GM12878 (cell line): ENCODE measurements at regions of chr15 and their contacts with region 1.

Region 1: DNA sequence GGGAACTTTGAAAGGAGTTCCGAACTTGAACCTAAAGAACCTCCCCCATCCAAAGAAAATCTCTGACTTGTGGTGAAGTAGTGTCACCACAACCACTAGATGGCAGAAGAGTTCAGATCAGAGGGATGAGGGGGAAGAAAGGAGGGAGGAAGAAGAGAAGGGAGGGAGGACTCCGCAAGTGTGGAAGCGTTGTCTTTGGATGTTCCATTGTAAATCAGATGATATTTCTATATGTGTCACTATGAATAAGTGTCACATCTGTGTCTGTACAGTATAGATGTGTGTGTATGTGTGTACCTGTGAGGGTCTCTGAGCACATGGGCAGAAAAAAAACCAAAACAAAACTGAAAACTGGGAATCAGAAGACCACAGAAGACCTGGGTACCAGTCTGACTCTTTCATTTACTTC is 16.9 kb downstream of the SLC24A1 start:
- DNase-seq: peak; percentile 28
- ATAC-seq: peak; percentile 77
- H3K4me3 ChIP-seq: no peak overlapping the region
- H3K27ac ChIP-seq: no peak overlapping the region
- H3K4me1 ChIP-seq: no peaks in the 10 kb centered on the region
- H3K27me3 ChIP-seq: no peaks in the 10 kb centered on the region
- CTCF ChIP-seq: peak; percentile 78 to 89 (median 88)
- EP300 ChIP-seq: no peak
- POLR2A ChIP-seq: no peak
- RAD21 ChIP-seq: peak; percentile 94

Region 2: GRCh38 chr15:64792282-64792681 is 846.4 kb before region 1 on chr15:
- CTCF ChIA-PET with region 1: no interaction called
- POLR2A ChIA-PET with region 1: no interaction called
- RAD21 ChIA-PET with region 1: no interaction called
- SMC1A ChIA-PET with region 1: no interaction called
- in situ Hi-C with region 1: no loop called
- intact Hi-C with region 1: no loop called
- DNase-seq: no peak
- ATAC-seq: no peak
- H3K4me3 ChIP-seq: no peak overlapping the region
- H3K27ac ChIP-seq: no peak overlapping the region
- H3K4me1 ChIP-seq: no peaks in the 10 kb centered on the region
- H3K27me3 ChIP-seq: no peaks in the 10 kb centered on the region
- CTCF ChIP-seq: no peak
- EP300 ChIP-seq: no peak
- POLR2A ChIP-seq: no peak
- RAD21 ChIP-seq: no peak

Region 3: GRCh38 chr15:65434201-65434600 is 204.5 kb before region 1 on chr15:
- CTCF ChIA-PET with region 1: no interaction called
- POLR2A ChIA-PET with region 1: no interaction called
- RAD21 ChIA-PET with region 1: no interaction called
- SMC1A ChIA-PET with region 1: no interaction called
- in situ Hi-C with region 1: no loop called
- intact Hi-C with region 1: no loop called
- DNase-seq: no peak
- ATAC-seq: no peak
- H3K4me3 ChIP-seq: no peak overlapping the region
- H3K27ac ChIP-seq: no peak overlapping the region
- H3K4me1 ChIP-seq: no peaks in the 10 kb centered on the region
- H3K27me3 ChIP-seq: no peaks in the 10 kb centered on the region; a peak in 1 of 4 replicates
- CTCF ChIP-seq: no peak
- EP300 ChIP-seq: no peak
- POLR2A ChIP-seq: no peak
- RAD21 ChIP-seq: no peak

Region 4: GRCh38 chr15:65603134-65603533 is 35.6 kb before region 1 on chr15:
- CTCF ChIA-PET with region 1: no interaction called
- POLR2A ChIA-PET with region 1: no interaction called
- RAD21 ChIA-PET with region 1: no interaction called
- SMC1A ChIA-PET with region 1: no interaction called
- in situ Hi-C with region 1: no loop called
- intact Hi-C with region 1: no loop called
- DNase-seq: no peak
- ATAC-seq: no peak
- H3K4me3 ChIP-seq: no peak overlapping the region
- H3K27ac ChIP-seq: no peak overlapping the region
- H3K4me1 ChIP-seq: no peaks in the 10 kb centered on the region
- H3K27me3 ChIP-seq: no peaks in the 10 kb centered on the region
- CTCF ChIP-seq: no peak
- EP300 ChIP-seq: no peak
- POLR2A ChIP-seq: no peak
- RAD21 ChIP-seq: no peak

Region 5: GRCh38 chr15:65651831-65652749 is 13.4 kb after region 1 on chr15:
- CTCF ChIA-PET with region 1: interaction called, 24 read pairs
- POLR2A ChIA-PET with region 1: no interaction called
- RAD21 ChIA-PET with region 1: interaction called, 3 read pairs
- SMC1A ChIA-PET with region 1: interaction called, 5 read pairs
- in situ Hi-C with region 1: no loop called
- intact Hi-C with region 1: no loop called
- DNase-seq: no peak
- ATAC-seq: no peak
- H3K4me3 ChIP-seq: no peak overlapping the region
- H3K27ac ChIP-seq: no peak overlapping the region
- H3K4me1 ChIP-seq: peaks cover 9% of the 10 kb centered on the region
- H3K27me3 ChIP-seq: no peaks in the 10 kb centered on the region
- CTCF ChIP-seq: no peak
- EP300 ChIP-seq: no peak
- POLR2A ChIP-seq: no peak; the same call in 1 of the 2 replicates
- RAD21 ChIP-seq: no peak

Region 6: DNA sequence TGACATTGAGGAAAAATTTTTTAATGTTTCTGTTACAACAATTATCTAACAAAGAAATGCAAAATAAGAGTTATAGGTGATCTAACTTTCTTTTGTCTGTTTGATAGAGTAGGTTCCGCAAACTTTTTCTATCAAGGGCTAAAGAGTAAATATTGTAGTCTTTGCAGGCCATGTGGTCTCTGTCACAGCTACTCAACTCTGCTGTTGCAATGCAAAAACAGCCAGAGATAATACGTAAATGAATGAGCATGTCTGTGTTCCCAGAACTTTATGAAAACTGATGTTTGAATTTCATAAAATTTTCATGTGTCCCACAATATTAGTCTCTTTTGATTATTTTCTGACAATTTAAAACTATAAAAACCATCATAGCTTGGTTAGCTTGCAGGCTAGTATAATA is 56.4 kb after region 1 on chr15:
- CTCF ChIA-PET with region 1: interaction called, 18 read pairs
- POLR2A ChIA-PET with region 1: no interaction called
- RAD21 ChIA-PET with region 1: no interaction called
- SMC1A ChIA-PET with region 1: interaction called, 5 read pairs
- in situ Hi-C with region 1: no loop called
- intact Hi-C with region 1: no loop called
- DNase-seq: no peak
- ATAC-seq: no peak
- H3K4me3 ChIP-seq: no peak overlapping the region
- H3K27ac ChIP-seq: no peak overlapping the region
- H3K4me1 ChIP-seq: peaks cover 4% of the 10 kb centered on the region
- H3K27me3 ChIP-seq: no peaks in the 10 kb centered on the region
- CTCF ChIP-seq: no peak
- EP300 ChIP-seq: no peak
- POLR2A ChIP-seq: no peak
- RAD21 ChIP-seq: no peak

Region 7: GRCh38 chr15:65856821-65857455 is 218.3 kb after region 1 on chr15:
- CTCF ChIA-PET with region 1: interaction called, 25 read pairs
- POLR2A ChIA-PET with region 1: no interaction called
- RAD21 ChIA-PET with region 1: interaction called, 5 read pairs
- SMC1A ChIA-PET with region 1: interaction called, 3 read pairs
- in situ Hi-C with region 1: loop called (anchors 5 kb)
- intact Hi-C with region 1: loop called (anchors 5 kb)
- DNase-seq: no peak
- ATAC-seq: peak; percentile 89
- H3K4me3 ChIP-seq: no peak overlapping the region
- H3K27ac ChIP-seq: no peak overlapping the region
- H3K4me1 ChIP-seq: peaks cover 19% of the 10 kb centered on the region
- H3K27me3 ChIP-seq: no peaks in the 10 kb centered on the region
- CTCF ChIP-seq: peak; percentile 74 to 91 (median 88)
- EP300 ChIP-seq: no peak
- POLR2A ChIP-seq: no peak
- RAD21 ChIP-seq: peak; percentile 51

Region 8: DNA sequence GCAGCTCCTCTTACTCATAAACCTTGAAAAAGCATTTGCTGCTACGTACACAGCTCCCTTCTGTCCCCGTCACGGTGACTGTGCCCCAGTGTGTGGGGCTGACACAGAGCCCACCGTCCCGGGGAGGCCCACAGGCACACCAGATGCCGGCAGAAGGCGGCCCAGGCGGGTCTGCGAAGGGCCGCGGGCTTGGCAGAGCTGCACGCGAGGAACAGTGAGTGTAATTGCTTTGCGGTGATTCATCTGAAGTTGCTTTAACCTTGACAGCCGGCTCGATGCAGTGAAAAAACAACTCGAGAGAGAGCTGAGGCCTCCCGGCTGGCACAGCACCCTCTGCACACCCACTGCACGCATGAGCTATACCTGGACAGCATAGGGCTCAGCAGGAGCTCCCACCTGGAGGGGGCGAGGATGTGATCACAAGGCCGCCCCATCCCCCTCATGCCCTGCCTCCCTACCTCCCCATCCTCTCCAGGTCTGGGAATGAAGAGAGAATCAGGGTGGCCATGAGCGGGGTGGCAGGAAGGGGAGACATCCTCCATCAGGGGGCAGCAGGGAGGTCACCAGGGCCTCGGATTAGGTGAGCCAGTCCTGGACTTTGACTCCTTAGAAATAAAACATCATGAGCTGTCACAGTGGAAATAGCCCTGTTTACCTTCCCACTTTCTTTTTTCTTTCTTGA is 442.2 kb after region 1 on chr15:
- CTCF ChIA-PET with region 1: interaction called, 12 read pairs
- POLR2A ChIA-PET with region 1: no interaction called
- RAD21 ChIA-PET with region 1: no interaction called
- SMC1A ChIA-PET with region 1: no interaction called
- in situ Hi-C with region 1: no loop called
- intact Hi-C with region 1: loop called (anchors 10 kb)
- DNase-seq: no peak
- ATAC-seq: peak; percentile 32; the same call in 2 of the 3 replicates
- H3K4me3 ChIP-seq: no peak overlapping the region
- H3K27ac ChIP-seq: no peak overlapping the region
- H3K4me1 ChIP-seq: no peaks in the 10 kb centered on the region
- H3K27me3 ChIP-seq: no peaks in the 10 kb centered on the region; a peak in 1 of 4 replicates
- CTCF ChIP-seq: 0 out of 6 replicates have a peak, but pooled peaks of 2 of the 3 experiments have one; percentile 0 to 11
- EP300 ChIP-seq: no peak
- POLR2A ChIP-seq: no peak
- RAD21 ChIP-seq: 0 out of 2 replicates have a peak, but pooled peaks have one; percentile 10